ENCODE measurements at regions of chr11 and their contacts with region 1.

Region 1: GRCh38 chr11:79493555-79494171 is 52.8 kb upstream of the TENM4 start:
- DNase-seq: peak; percentile 62
- ATAC-seq: peak; percentile 99
- H3K4me3 ChIP-seq: no peak overlapping the region
- H3K27ac ChIP-seq: no peak overlapping the region
- H3K4me1 ChIP-seq: no peaks in the 10 kb centered on the region
- H3K27me3 ChIP-seq: peaks cover 12% of the 10 kb centered on the region
- CTCF ChIP-seq: peak; percentile 81
- POLR2A ChIP-seq: no peak
- RAD21 ChIP-seq: peak; percentile 83

Region 2: GRCh38 chr11:79062814-79063762 is 430.6 kb before region 1 on chr11:
- CTCF ChIA-PET with region 1: no interaction called
- POLR2A ChIA-PET with region 1: no interaction called
- dilution Hi-C with region 1: no loop called
- in situ Hi-C with region 1: no loop called
- intact Hi-C with region 1: loop called (anchors 1 kb)
- DNase-seq: peak; percentile 41
- ATAC-seq: peak; percentile 60
- H3K4me3 ChIP-seq: no peak overlapping the region
- H3K27ac ChIP-seq: no peak overlapping the region
- H3K4me1 ChIP-seq: peaks cover 13% of the 10 kb centered on the region; the same call in 1 of the 2 replicates
- H3K27me3 ChIP-seq: no peaks in the 10 kb centered on the region
- CTCF ChIP-seq: peak; percentile 48
- POLR2A ChIP-seq: no peak
- RAD21 ChIP-seq: peak; percentile 48

Region 3: GRCh38 chr11:79400717-79401686 is 92.7 kb before region 1 on chr11:
- CTCF ChIA-PET with region 1: interaction called, 14 read pairs
- POLR2A ChIA-PET with region 1: no interaction called
- dilution Hi-C with region 1: no loop called
- in situ Hi-C with region 1: no loop called
- intact Hi-C with region 1: loop called (anchors 1 kb)
- DNase-seq: peak; percentile 25
- ATAC-seq: peak; percentile 53; the same call in 1 of the 2 replicates
- H3K4me3 ChIP-seq: no peak overlapping the region
- H3K27ac ChIP-seq: no peak overlapping the region
- H3K4me1 ChIP-seq: peaks cover 9% of the 10 kb centered on the region
- H3K27me3 ChIP-seq: no peaks in the 10 kb centered on the region
- CTCF ChIP-seq: peak; percentile 63
- POLR2A ChIP-seq: no peak
- RAD21 ChIP-seq: peak; percentile 70

Region 4: GRCh38 chr11:79461144-79461543 is 32.5 kb before region 1 on chr11:
- CTCF ChIA-PET with region 1: interaction called, 3 read pairs
- POLR2A ChIA-PET with region 1: no interaction called
- dilution Hi-C with region 1: no loop called
- in situ Hi-C with region 1: no loop called
- intact Hi-C with region 1: loop called (anchors 1 kb)
- DNase-seq: peak; percentile 51
- ATAC-seq: peak; percentile 97
- H3K4me3 ChIP-seq: no peak overlapping the region
- H3K27ac ChIP-seq: no peak overlapping the region
- H3K4me1 ChIP-seq: no peaks in the 10 kb centered on the region
- H3K27me3 ChIP-seq: peaks cover 6% of the 10 kb centered on the region; the same call in 1 of the 2 replicates
- CTCF ChIP-seq: peak; percentile 67
- POLR2A ChIP-seq: no peak
- RAD21 ChIP-seq: peak; percentile 53

Region 5: GRCh38 chr11:79525257-79525656 is 31.6 kb after region 1 on chr11:
- CTCF ChIA-PET with region 1: no interaction called
- POLR2A ChIA-PET with region 1: no interaction called
- dilution Hi-C with region 1: no loop called
- in situ Hi-C with region 1: no loop called
- intact Hi-C with region 1: no loop called
- DNase-seq: no peak
- ATAC-seq: no peak
- H3K4me3 ChIP-seq: no peak overlapping the region
- H3K27ac ChIP-seq: no peak overlapping the region
- H3K4me1 ChIP-seq: no peaks in the 10 kb centered on the region
- H3K27me3 ChIP-seq: no peaks in the 10 kb centered on the region; the same call in none of the 2 replicates
- CTCF ChIP-seq: no peak
- POLR2A ChIP-seq: no peak
- RAD21 ChIP-seq: no peak

Measured in IMR-90 (cell line).